Naive thymus-derived CD4-positive, alpha-beta T cell (primary cell): ENCODE measurements at regions of chr6 and their contacts with region 1.

Region 1: DNA sequence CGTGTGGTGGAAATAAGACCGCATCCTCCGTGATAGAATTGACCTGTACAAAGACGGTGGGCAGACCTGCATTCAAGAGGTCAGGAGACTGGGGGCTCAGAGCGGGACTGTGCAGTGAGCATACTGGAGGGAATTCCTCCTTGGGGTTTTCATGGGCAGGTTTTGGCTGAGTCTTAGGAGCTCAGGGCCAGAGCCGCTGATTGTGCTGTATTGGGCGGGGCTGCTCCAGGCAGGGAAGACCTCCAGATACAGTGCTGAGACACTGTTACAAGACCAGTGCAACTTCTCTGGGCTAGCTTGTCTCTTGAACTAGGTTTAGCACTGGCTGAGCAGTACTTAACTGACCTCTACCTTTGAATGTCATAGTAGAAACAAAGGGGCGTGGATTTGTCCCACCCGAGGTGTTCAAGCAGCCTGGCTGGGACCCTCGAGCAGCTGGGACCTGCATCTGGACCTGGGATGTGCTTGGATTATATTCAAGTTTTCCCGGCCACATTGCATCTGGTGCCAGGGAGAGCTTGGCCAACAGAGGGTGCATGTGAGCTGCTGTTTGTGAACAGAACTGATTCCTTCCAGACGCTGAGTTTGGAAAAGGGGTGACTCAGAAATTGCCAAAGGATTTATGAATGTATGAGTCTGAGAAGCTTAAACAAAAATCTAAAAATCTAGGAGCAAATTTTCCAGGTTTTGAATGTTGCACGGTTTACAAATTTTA is 33.4 kb upstream of the SLC22A1 start:
- DNase-seq: no peak
- ATAC-seq: no peak
- H3K4me3 ChIP-seq: no peak overlapping the region
- H3K4me3 Mint-ChIP-seq: no peak overlapping the region
- H3K27ac ChIP-seq: no peak overlapping the region
- H3K27ac Mint-ChIP-seq: peak overlapping the region in 1 of 9 donors; percentile 10
- H3K4me1 ChIP-seq: no peaks in the 10 kb centered on the region
- H3K4me1 Mint-ChIP-seq: peaks cover 0 to 12% (median 0%) of the 10 kb centered on the region in 7 donors
- H3K27me3 ChIP-seq: no peaks in the 10 kb centered on the region
- H3K27me3 Mint-ChIP-seq: no peaks in the 10 kb centered on the region

Region 2: GRCh38 chr6:160000280-160000704 is 87.9 kb before region 1 on chr6:
- CTCF ChIA-PET with region 1: no interaction called
- POLR2A ChIA-PET with region 1: no interaction called
- intact Hi-C with region 1: no loop called
- DNase-seq: no peak
- ATAC-seq: no peak
- H3K4me3 ChIP-seq: no peak overlapping the region
- H3K4me3 Mint-ChIP-seq: peak overlapping the region in 4 of 10 donors; percentile 24 to 74 (median 64)
- H3K27ac ChIP-seq: no peak overlapping the region
- H3K27ac Mint-ChIP-seq: peak overlapping the region in 2 of 9 donors; percentile 34 to 63
- H3K4me1 ChIP-seq: peaks cover 6 to 19% of the 10 kb centered on the region in 2 donors
- H3K4me1 Mint-ChIP-seq: peaks cover 47 to 70% (median 60%) of the 10 kb centered on the region in 7 donors
- H3K27me3 ChIP-seq: no peaks in the 10 kb centered on the region
- H3K27me3 Mint-ChIP-seq: no peaks in the 10 kb centered on the region

Region 3: GRCh38 chr6:160534050-160534696 is 445.9 kb after region 1 on chr6:
- CTCF ChIA-PET with region 1: no interaction called
- POLR2A ChIA-PET with region 1: no interaction called
- intact Hi-C with region 1: loop called (anchors 1 to 10 kb)
- DNase-seq: peak; percentile 2 to 55 (median 37)
- ATAC-seq: peak; percentile 86
- H3K4me3 ChIP-seq: no peak overlapping the region
- H3K4me3 Mint-ChIP-seq: no peak overlapping the region
- H3K27ac ChIP-seq: no peak overlapping the region
- H3K27ac Mint-ChIP-seq: no peak overlapping the region
- H3K4me1 ChIP-seq: no peaks in the 10 kb centered on the region
- H3K4me1 Mint-ChIP-seq: no peaks in the 10 kb centered on the region
- H3K27me3 ChIP-seq: no peaks in the 10 kb centered on the region
- H3K27me3 Mint-ChIP-seq: peaks cover 0 to 18% (median 5%) of the 10 kb centered on the region in 5 donors